Activated CD4-positive, alpha-beta T cell treated with anti-CD3 and anti-CD28 coated beads for 36 hours (primary cell): ENCODE measurements at regions of chr9 and their contacts with region 1.

Region 1: GRCh38 chr9:503881-504852 is 289.5 kb downstream of the DOCK8 start:
- DNase-seq: peak; percentile 81
- ATAC-seq: peak; percentile 92
- H3K4me3 Mint-ChIP-seq: peak within 1 kb of the TSS; percentile 74
- H3K27ac Mint-ChIP-seq: peak within 1 kb of the TSS; percentile 63
- H3K4me1 Mint-ChIP-seq: peaks cover 8% of the 10 kb centered on the region
- H3K27me3 Mint-ChIP-seq: peaks cover 26% of the 10 kb centered on the region

Region 2: DNA sequence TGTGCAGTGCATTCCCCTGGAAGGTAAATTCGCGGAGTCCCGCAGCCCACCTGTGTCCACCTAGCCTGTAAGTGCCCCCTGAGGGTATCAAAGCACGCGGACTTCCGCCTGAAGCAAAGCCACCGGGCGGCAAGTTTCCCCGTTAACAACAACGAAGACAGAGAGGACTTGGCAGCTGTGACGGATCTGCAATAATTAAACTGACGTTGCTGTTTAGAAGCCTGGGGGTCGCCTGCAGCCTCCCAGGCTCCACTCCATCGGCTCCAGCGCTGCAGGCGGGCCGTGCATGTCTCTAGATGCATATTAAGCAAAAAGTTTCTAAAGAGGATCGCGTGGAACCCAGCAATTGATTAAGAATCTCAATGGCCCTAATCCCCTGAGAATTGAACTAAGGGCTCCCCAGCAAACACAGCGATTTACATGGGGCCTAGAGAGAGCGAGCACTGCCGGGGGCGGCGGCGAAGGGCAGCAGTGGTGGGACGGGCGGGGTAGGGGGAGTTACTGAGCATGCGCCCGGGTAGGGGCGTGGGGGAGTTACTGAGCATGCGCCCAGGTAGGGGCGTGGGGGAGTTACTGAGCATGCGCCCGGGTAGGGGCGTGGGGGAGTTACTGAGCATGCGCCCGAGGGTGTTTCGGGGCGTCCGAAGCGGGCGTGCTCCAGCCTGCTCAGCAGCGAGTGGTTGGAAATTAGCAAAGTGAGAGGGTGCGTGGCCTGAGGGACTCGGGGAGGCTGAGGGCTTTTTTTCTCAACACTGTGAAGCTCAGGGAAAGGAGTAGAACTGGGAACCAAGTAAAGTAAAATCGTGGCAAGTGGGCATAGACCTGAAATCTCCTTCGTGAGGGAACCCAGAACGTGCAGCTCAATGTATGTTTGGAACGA is 34.3 kb before region 1 on chr9:
- CTCF ChIA-PET with region 1: interaction called, 3 read pairs
- POLR2A ChIA-PET with region 1: interaction called, 4 read pairs
- intact Hi-C with region 1: loop called (anchors 1 to 2 kb)
- DNase-seq: peak; percentile 95
- ATAC-seq: peak; percentile 97
- H3K4me3 Mint-ChIP-seq: peak overlapping the region; percentile 91
- H3K27ac Mint-ChIP-seq: peak overlapping the region; percentile 94
- H3K4me1 Mint-ChIP-seq: peaks cover 20% of the 10 kb centered on the region
- H3K27me3 Mint-ChIP-seq: no peaks in the 10 kb centered on the region

Region 3: DNA sequence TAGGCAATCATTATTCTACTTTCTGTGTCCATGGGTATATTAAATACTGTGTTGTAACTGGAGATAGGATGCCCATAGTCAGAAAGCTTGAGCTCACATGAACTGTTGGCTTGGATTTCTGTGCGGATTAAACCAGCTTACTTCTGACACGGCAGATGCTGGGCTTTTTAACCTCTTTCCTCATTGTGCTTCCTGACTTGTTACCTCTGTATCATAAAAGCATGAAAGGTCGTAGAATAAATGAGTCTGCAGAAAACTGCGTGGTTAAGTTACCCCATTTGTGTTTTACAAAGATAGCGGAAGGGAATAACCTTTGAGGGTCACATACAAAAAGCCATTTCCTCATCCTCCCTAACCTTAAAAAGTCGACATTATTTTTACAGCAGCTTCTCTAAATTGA is 137.8 kb after region 1 on chr9:
- CTCF ChIA-PET with region 1: no interaction called
- POLR2A ChIA-PET with region 1: no interaction called
- intact Hi-C with region 1: no loop called
- DNase-seq: no peak
- ATAC-seq: no peak
- H3K4me3 Mint-ChIP-seq: no peak overlapping the region
- H3K27ac Mint-ChIP-seq: no peak overlapping the region
- H3K4me1 Mint-ChIP-seq: peaks cover 6% of the 10 kb centered on the region
- H3K27me3 Mint-ChIP-seq: no peaks in the 10 kb centered on the region